Endothelial cell of umbilical vein (primary cell): ENCODE measurements at regions of chr5 and their contacts with region 1.

Region 1: DNA sequence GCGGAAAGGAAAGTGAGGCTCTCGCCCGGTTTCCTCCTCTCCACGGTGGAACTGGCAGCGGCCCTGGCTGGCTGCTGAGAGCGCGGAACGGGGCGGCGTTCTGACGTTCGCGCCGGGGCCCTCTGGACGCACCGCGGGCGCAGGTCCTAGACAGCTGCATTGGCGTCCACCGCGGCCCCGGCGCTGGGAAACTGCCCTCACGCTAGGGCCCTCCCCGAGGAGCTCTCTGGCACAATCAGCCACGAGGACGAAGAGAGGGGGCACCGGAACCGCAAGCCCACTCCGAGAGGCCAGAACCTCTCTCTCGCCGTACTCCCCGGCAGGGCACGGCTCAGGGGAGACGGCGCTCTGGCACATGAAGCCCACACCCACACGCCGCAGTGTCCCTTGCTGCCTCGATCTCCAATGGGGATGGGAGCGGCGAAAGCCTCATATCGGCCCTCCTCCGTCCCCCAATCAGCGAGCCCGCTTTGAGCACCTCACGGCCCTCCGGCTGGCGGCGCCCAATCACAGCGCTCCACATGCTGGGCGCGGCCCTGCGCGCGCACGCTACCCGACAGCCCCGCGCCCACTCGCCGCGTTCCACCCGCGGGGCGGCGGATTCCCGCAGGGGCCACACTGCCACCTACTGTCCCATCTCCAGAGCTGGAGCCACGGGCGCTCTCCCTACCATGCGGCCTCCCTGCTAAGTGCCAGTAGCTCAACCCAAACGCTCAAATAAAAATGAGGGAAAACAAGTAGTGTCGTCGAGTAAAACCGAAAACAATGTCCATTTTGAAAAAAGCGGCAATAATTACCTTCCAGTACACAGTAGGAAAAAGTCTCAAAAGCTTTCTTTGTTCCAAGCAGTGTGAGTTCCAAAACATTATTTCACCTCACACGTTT is 11.8 kb downstream of the MRPS27 start:
- DNase-seq: peak; percentile 99
- H3K4me3 ChIP-seq: peak overlapping the region; percentile 30 to 77 (median 53)
- H3K27ac ChIP-seq: peak overlapping the region; percentile 45
- H3K4me1 ChIP-seq: peaks cover 10% of the 10 kb centered on the region
- H3K27me3 ChIP-seq: no peaks in the 10 kb centered on the region
- CTCF ChIP-seq: peak; percentile 88 to 91
- POLR2A ChIP-seq: peak; percentile 98

Region 2: GRCh38 chr5:71782771-71783770 is 525.1 kb before region 1 on chr5:
- CTCF ChIA-PET with region 1: interaction called, 46 read pairs
- POLR2A ChIA-PET with region 1: interaction called, 5 read pairs
- dilution Hi-C with region 1: no loop called
- intact Hi-C with region 1: loop called (anchors 1 kb)
- DNase-seq: peak; percentile 74
- H3K4me3 ChIP-seq: no peak overlapping the region
- H3K27ac ChIP-seq: no peak overlapping the region
- H3K4me1 ChIP-seq: peaks cover 6% of the 10 kb centered on the region
- H3K27me3 ChIP-seq: peaks cover 17 to 23% of the 10 kb centered on the region in 2 experiments
- CTCF ChIP-seq: peak; percentile 77 to 79
- POLR2A ChIP-seq: no peak

Region 3: DNA sequence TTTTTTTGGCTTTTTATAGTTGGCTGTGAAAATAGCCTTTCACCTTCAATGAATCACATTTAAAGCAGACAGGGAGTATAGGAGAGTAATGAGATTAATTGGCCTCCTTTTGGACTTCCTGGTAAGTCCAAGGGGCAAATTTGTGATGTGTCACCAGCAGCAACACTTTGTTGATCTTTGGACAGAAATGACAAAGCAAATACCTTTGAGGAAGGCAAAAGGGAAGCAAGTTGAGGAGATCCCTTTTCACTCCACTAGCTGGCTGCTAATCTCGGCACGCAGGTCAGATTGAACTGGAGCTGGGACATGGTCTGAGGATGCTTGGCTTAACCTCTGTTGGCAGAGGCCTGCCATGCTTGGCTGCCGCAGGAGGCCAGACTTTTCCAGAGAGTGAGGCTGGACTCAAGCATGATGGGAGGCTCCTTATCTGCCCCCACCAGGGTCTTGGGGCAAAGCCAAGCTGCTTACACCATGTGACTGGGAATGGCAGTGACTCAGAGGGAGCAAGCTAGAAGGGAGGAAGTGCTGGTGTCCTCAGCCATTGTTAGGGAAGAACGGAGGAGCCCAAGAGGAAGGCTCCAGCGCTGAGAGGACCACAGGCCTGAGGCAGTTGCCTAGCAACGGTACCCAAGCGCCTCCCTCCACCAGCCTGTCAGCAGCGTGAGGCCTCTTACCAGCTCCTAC is 375.4 kb before region 1 on chr5:
- CTCF ChIA-PET with region 1: interaction called, 4 read pairs
- POLR2A ChIA-PET with region 1: no interaction called
- dilution Hi-C with region 1: no loop called
- intact Hi-C with region 1: loop called (anchors 2 kb)
- DNase-seq: peak; percentile 92
- H3K4me3 ChIP-seq: no peak overlapping the region
- H3K27ac ChIP-seq: peak overlapping the region; percentile 88
- H3K4me1 ChIP-seq: peaks cover 22% of the 10 kb centered on the region
- H3K27me3 ChIP-seq: peaks cover 4 to 7% of the 10 kb centered on the region in 2 experiments
- CTCF ChIP-seq: peak in 1 of 2 donors; percentile 2
- POLR2A ChIP-seq: no peak

Region 4: GRCh38 chr5:72210888-72211678 is 97.1 kb before region 1 on chr5:
- CTCF ChIA-PET with region 1: interaction called, 11 read pairs
- POLR2A ChIA-PET with region 1: interaction called, 3 read pairs
- dilution Hi-C with region 1: no loop called
- intact Hi-C with region 1: loop called (anchors 1 kb)
- DNase-seq: peak; percentile 93
- H3K4me3 ChIP-seq: peak overlapping the region in 1 of 3 experiments; percentile 26
- H3K27ac ChIP-seq: peak overlapping the region; percentile 97
- H3K4me1 ChIP-seq: peaks cover 38% of the 10 kb centered on the region
- H3K27me3 ChIP-seq: no peaks in the 10 kb centered on the region
- CTCF ChIP-seq: no peak
- POLR2A ChIP-seq: peak; percentile 31

Region 5: DNA sequence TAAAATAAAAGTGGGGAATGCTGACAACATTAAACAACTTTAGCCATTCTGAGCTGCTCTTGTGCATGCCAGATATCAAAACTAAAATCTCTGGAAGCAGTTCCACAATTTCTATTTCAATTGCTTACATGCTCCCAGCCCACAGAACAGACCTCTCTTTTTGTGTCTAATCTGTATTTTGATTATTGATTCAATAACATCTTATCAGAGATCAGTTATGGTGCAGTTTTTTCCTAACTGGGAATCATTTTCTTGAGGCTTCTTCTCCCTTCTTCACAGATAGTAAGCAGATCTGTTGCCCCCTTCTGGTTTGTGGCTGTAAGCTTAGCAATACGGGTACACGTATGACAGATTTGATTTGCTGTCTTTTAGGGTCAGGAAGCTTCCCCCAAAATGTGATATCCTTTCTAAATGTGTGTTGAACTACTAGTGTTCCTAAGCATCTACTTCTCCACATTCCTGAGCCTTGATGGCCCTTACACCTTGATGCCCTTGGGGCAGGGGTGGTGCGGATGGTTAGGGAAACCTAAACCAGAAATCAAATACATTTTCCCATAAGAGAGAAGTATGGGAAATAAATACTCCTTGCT is 27.5 kb before region 1 on chr5:
- CTCF ChIA-PET with region 1: interaction called, 22 read pairs
- POLR2A ChIA-PET with region 1: no interaction called
- dilution Hi-C with region 1: no loop called
- intact Hi-C with region 1: no loop called
- DNase-seq: peak; percentile 60
- H3K4me3 ChIP-seq: no peak overlapping the region
- H3K27ac ChIP-seq: no peak overlapping the region
- H3K4me1 ChIP-seq: peaks cover 18% of the 10 kb centered on the region
- H3K27me3 ChIP-seq: no peaks in the 10 kb centered on the region
- CTCF ChIP-seq: peak; percentile 32 to 51
- POLR2A ChIP-seq: no peak

Region 6: DNA sequence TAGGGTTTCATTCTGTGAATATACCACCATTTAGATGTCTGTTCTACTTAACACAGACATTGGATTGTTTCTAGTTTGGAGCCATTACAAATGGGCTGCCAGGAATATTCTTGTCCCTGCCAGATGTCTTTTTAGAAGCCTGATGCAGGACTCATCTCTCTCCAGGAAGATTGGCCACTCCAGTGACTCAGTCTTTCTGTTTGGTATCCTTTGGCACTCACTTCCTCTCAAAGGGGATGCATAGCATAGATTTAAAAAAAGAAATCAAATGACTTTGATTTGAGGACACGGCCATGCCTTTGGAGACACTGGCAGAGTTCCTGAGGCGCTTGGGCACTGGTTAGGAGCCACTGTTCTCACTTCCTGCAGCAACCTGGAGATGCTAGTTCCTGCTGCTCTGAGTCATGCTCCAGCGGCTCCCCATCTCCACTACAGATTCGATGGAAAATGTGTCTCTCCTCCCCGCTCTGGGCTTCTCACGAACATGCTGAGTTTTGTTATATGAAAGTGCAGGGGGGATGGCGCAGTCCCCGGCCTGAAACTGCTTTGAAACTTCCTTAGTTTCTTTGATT is 202.5 kb after region 1 on chr5:
- CTCF ChIA-PET with region 1: no interaction called
- POLR2A ChIA-PET with region 1: no interaction called
- dilution Hi-C with region 1: no loop called
- intact Hi-C with region 1: no loop called
- DNase-seq: peak; percentile 80
- H3K4me3 ChIP-seq: no peak overlapping the region
- H3K27ac ChIP-seq: peak overlapping the region; percentile 65
- H3K4me1 ChIP-seq: peaks cover 49% of the 10 kb centered on the region
- H3K27me3 ChIP-seq: no peaks in the 10 kb centered on the region
- CTCF ChIP-seq: no peak
- POLR2A ChIP-seq: no peak